Posterior vena cava (tissue), 2 donors: ENCODE measurements at regions of chr18 and their contacts with region 1.

Region 1: DNA sequence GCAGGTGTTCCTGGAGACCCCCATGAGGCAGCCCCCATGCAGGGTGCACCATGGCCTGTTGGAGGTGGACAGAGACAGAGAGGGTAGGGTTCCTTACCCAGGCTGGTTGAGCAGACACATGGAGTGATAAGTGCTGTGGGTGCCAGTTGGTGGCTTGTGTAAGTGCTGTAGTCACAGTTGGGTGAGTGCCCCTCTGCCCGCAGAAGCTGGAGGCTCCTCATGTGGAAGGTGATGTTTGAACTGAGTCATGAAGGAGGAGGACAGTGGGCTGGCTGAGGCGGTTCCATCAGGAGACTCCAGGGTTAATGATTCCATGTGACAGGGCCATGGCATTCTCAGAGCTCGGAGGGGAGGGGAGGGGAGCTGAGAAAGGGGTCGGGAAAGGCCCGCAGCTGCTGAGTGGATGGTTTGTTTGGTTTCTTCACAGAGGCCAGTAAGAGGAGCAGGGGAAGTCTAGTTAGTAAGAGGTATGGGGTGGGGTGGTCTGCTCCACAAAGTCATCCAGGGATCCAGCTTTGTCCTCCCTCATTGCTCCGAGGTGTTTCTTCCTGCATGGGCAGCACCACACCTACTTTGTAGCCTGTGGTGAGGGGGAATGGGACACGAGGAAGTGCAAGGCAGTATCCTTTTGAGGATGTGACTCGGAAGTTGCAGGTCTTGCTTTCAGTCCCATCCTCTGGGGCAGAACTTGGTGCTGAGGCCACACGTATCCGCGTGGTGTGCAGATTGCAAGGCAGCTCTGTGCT is 13.6 kb downstream of the IMPA2 start:
- DNase-seq: peak; percentile 50

Region 2: DNA sequence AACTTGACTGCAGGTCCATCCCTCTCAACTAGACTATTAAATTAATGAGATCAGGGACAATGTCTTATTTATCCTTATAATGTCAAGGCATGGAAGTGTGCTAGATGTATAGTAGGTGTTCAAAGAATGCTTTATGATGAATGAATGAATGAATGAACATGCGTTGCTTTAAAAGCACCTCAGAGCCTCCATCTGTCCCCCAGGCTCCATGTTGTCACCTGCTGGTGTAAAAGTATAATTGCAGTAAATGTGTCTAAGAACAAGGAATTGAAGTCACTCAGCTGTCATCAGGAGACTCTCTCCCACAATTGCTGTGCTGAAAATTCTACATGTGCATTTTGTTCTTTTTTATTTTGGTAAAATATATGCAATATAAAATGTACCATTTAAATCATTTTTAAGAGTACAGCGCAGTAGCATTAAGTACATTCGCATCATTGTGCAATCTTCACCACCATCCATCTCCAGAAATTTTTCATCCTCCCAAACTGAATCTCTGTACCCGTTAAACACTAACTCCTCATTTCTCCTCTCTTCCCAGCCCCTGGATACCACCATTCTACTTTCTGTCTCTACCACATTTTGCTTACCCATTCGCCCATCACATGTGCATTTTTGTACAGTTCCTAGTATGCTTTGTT is 253.2 kb before region 1 on chr18:
- intact Hi-C with region 1: no loop called
- DNase-seq: no peak

Region 3: DNA sequence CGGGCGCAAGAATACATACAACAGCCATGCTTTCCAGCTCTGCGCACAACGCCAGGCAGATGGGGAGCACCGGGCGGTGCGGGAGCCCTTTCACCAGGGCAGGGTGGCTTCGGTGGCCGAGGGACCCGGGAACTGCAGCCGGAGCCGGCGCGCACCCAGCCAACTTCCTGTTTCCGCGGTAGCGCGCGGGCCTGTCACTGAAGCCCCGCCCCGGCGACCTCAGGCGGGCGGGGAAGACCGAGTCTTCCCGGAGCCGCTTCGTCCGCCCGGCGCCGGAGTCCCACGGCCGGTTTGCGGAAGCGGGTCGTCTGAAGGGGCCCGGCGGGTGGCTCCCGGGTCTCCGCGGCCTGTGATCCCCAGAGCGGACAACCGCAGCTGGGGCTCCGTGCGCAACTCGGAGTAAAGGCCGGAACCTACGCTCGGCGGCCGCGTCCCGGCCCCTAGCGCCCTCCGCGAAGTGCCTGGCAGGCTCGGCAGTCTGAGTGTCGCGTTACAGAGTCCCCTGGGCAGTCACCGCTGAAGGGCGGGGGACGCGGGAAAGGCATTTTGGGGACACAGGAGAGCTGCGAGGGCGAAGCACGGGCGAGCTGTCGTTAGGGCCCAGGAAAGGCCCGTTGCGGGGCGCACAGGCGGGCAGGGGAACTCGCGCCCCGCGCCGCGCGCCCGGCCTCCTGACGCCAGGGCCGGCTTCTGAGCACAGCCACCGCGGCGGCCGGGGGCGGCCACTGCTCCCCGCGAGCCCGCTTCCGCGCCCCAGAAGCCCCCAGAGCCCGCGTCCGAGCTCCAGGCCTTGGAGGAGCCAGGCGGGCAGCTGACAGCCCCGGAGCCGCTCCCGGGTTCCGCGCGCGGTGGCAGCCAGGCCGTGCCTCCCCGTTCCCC is 86.5 kb before region 1 on chr18 and contains the start of gene MPPE1:
- intact Hi-C with region 1: no loop called
- DNase-seq: peak; percentile 97
- total RNA-seq, gene MPPE1: 26.2 to 39.6 TPM

Region 4: DNA sequence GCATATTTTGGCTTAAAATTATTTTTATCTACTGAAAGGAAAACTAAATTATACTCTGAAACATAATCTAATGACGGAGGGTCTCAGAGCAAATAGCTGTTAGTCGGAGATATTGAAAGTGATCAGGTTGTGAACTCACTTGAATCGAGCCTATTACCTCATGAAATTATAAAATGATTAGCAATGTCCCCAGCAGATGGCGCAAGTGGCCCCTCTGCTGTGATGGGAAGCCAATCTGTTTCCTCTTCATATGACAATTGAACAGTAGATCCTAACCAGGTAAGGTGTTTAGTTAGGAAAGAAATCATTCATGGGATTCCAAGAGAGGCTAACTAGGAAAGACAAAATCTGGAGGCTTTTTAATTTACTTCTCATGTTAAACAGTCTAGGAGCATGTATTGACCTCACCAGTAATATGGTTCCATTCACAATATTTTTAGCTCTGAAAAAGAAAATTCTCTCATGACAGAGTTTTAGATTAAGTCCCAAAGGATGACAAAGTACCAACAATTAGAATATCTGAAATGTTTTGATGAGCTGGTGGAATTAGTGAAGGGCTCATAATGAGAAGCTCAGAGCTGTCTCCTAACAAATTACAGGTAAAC is 56.9 kb before region 1 on chr18:
- intact Hi-C with region 1: loop called (anchors 1 to 5 kb)
- DNase-seq: peak; percentile 89

Region 5: GRCh38 chr18:11947214-11948191 is 47.4 kb before region 1 on chr18:
- intact Hi-C with region 1: loop called in 1 of 2 experiments (anchors 1 kb)
- DNase-seq: peak; percentile 97